ENCODE measurements at regions of chr16 and their contacts with region 1.

Region 1: DNA sequence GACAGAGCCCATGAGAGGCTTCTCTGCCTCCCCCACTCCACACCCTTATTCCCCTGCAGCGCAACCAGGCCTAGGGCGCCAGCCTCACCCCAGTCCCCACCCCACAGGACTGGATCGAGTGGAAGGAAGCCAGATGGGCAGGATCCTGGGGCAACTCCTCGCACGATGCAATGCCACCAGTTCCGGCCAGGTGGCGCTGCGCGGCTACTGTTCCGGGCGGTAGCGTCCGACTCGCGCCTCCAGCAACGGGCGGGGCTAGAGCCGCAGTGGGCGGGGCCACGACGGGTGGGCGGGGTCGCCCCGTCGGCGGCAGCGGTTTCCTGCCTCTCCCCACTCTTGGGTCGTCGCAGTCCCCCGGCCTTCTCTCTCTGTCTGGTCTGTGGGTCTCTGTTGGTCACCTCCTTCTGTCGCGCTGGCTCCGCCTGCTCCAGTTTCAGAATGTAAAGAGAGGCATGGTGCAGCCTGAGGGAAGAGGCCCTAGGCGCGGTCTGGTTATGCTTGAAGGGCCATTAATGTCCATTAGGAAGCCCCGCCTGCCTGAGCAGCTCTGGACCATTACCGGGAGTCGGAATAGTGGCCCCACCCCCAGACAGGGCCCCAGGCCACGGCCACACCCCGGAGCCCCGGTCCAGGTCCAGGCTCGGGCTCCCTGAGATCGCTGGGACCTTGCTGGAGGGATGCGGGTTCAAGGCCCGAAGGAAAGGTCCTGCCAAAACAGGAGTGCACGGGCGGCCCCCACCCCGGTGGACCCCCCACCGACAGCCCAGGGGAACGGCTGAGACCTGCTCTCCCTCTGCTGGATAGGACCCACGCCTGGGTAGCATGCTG is 3.4 kb upstream of the NHERF2 start:
- DNase-seq: peak; percentile 66
- H3K4me3 ChIP-seq: peak overlapping the region; percentile 40
- H3K27ac ChIP-seq: peak overlapping the region; percentile 21
- H3K27me3 ChIP-seq: peaks cover 5% of the 10 kb centered on the region
- CTCF ChIP-seq: peak; percentile 87

Region 2: DNA sequence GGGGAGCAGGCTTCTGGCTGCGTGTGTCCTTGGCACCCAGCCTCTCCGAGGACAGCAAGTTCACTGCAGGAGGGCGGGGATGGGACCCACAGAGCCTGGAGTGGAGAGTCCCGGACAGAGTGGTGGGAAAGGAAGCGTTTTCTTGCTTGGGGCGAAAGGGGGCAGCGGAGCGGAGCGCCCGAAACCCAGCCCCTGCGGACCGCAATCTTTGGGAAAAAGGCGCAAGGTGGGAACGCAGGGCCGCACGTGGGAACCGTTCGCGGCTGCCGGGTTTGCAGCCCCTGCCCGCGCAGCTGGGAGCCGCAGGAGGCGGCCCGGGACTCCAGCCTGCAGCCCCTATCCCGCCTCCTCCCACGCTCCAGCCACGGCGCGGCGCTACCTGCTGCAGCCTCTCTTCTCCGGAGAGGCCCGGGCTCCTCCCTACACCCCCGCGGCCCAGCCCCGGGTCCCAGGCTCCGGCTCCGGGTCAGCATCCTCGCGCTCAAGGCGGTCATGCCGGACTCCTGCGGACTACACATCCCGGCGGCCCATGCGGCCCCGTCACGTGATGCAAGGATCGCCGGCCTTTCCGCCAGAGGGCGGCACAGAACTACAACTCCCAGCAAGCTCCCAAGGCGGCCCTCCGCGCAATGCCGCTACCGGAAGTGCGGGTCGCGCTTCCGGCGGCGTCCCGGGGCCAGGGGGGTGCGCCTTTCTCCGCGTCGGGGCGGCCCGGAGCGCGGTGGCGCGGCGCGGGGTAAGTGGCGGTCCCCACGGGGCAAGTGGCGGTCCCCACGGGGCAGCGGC is 24.2 kb after region 1 on chr16 and contains the starts of genes NTHL1 and TSC2:
- CTCF ChIA-PET with region 1: interaction called, 19 read pairs
- POLR2A ChIA-PET with region 1: interaction called, 3 read pairs
- DNase-seq: peak; percentile 88
- H3K4me3 ChIP-seq: peak within 1 kb of the TSS; percentile 85
- H3K27ac ChIP-seq: peak within 1 kb of the TSS; percentile 31
- H3K27me3 ChIP-seq: no peaks in the 10 kb centered on the region
- CTCF ChIP-seq: peak; percentile 44
- polyA plus RNA-seq, gene NTHL1: 10.7 and 14.5 TPM in 2 replicates
- polyA plus RNA-seq, gene TSC2: 35.9 and 42.2 TPM in 2 replicates

Region 3: DNA sequence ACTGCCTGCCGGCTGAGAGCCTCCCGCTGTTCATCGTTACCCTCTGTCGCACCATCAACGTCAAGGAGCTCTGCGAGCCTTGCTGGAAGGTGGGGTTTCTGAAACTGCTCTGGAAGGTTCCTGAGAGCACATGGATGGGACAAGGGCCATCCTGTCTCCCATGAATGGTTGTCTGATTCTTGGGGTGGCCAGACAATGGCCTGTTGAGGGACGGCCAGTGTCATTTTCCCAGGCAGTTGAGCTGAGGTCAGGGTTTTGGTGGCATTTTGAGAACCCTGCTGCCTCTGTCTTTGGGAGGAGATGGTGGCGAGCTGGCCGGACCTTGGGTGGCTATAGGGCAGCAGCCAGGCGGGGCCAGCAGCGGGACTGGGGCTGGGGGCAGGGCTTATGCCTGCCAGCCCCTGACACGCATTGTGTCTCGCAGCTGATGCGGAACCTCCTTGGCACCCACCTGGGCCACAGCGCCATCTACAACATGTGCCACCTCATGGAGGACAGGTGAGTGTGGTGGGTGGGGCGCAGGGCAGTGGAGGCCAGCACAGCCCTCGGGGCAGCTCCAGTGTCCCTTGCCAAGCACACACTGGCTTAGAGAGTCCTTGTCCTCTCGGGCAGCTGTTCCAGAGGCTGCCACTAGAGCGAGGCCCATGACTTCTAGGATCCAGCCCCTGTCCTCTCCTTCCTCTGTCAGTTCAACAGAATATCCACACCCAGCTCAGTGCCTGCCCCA is 33.5 kb after region 1 on chr16:
- CTCF ChIA-PET with region 1: interaction called, 49 read pairs
- POLR2A ChIA-PET with region 1: interaction called, 5 read pairs
- DNase-seq: no peak
- H3K4me3 ChIP-seq: no peak overlapping the region
- H3K27ac ChIP-seq: no peak overlapping the region
- H3K27me3 ChIP-seq: no peaks in the 10 kb centered on the region
- CTCF ChIP-seq: 0 out of 2 replicates have a peak, but pooled peaks have one; percentile 10

Region 4: GRCh38 chr16:2148714-2149629 is 125.7 kb after region 1 on chr16:
- CTCF ChIA-PET with region 1: interaction called, 10 read pairs
- POLR2A ChIA-PET with region 1: interaction called, 13 read pairs
- DNase-seq: no peak
- H3K4me3 ChIP-seq: peak overlapping the region; percentile 53
- H3K27ac ChIP-seq: peak overlapping the region; percentile 11
- H3K27me3 ChIP-seq: no peaks in the 10 kb centered on the region
- CTCF ChIP-seq: no peak

Region 5: GRCh38 chr16:3745751-3746355 is 1722.5 kb after region 1 on chr16:
- CTCF ChIA-PET with region 1: no interaction called
- POLR2A ChIA-PET with region 1: no interaction called
- DNase-seq: no peak
- H3K4me3 ChIP-seq: no peak overlapping the region
- H3K27ac ChIP-seq: no peak overlapping the region
- H3K27me3 ChIP-seq: no peaks in the 10 kb centered on the region
- CTCF ChIP-seq: no peak